ENCODE measurements at regions of chrX and their contacts with region 1.

Region 1: DNA sequence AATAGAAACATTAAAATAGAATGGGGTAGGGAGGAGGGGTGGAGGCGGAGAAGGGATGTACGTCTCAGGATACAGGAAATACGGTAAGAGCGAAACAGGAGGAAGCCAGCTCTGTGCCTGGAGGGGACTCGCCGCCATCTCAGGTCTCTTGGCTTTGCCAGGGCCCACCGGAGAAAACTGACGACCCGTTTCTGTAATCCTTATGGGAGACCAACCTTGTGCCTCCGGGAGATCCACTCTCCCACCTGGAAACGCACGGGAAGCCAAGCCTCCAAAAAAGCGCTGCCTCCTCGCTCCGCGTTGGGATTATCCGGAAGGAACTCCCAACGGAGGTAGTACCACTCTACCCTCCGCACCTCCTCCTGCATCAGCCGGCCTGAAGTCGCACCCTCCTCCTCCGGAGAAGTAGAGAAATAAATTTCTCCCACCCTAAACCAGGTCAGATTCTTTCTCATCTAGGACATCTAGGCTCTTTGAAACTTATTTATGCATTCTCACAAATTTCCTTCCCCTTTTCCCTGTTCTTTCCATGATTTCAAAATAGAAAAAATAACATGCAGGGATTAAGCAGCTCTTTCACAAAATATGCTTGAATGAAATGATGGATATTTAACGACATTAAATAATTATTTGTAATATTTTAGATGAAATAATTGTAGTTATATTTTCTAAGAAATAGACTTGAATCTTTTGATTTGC is at the start of gene NBDY:
- DNase-seq: no peak
- ATAC-seq: peak; percentile 86
- H3K4me3 ChIP-seq: peak within 1 kb of the TSS; percentile 84
- H3K27ac ChIP-seq: peak within 1 kb of the TSS; percentile 74
- H3K4me1 ChIP-seq: no peaks in the 10 kb centered on the region
- H3K27me3 ChIP-seq: no peaks in the 10 kb centered on the region
- CTCF ChIP-seq: no peak
- EP300 ChIP-seq: no peak
- POLR2A ChIP-seq: peak; percentile 59
- RAD21 ChIP-seq: no peak
- polyA plus RNA-seq, gene NBDY: 113 to 115 TPM

Region 2: GRCh38 chrX:55717521-55718497 is 1011.5 kb before region 1 on chrX and contains the start of gene RRAGB:
- CTCF ChIA-PET with region 1: interaction called, 6 read pairs
- POLR2A ChIA-PET with region 1: no interaction called
- RAD21 ChIA-PET with region 1: interaction called, 3 read pairs
- SMC1A ChIA-PET with region 1: interaction called, 4 read pairs
- in situ Hi-C with region 1: loop called (anchors 25 kb)
- intact Hi-C with region 1: no loop called
- DNase-seq: peak; percentile 90
- ATAC-seq: peak; percentile 96
- H3K4me3 ChIP-seq: peak within 1 kb of the TSS; percentile 63
- H3K27ac ChIP-seq: peak within 1 kb of the TSS; percentile 84
- H3K4me1 ChIP-seq: no peaks in the 10 kb centered on the region
- H3K27me3 ChIP-seq: no peaks in the 10 kb centered on the region
- CTCF ChIP-seq: peak; percentile 42 to 65 (median 52); a peak in 5 of 6 replicates
- EP300 ChIP-seq: no peak
- POLR2A ChIP-seq: peak; percentile 80
- RAD21 ChIP-seq: peak; percentile 56
- polyA plus RNA-seq, gene RRAGB: 9.2 to 12.4 TPM

Region 3: GRCh38 chrX:56281789-56282188 is 447.5 kb before region 1 on chrX:
- CTCF ChIA-PET with region 1: interaction called, 36 read pairs
- POLR2A ChIA-PET with region 1: no interaction called
- RAD21 ChIA-PET with region 1: interaction called, 10 read pairs
- SMC1A ChIA-PET with region 1: interaction called, 12 read pairs
- in situ Hi-C with region 1: no loop called
- intact Hi-C with region 1: loop called (anchors 2 kb)
- DNase-seq: no peak
- ATAC-seq: no peak
- H3K4me3 ChIP-seq: no peak overlapping the region
- H3K27ac ChIP-seq: no peak overlapping the region
- H3K4me1 ChIP-seq: no peaks in the 10 kb centered on the region
- H3K27me3 ChIP-seq: no peaks in the 10 kb centered on the region
- CTCF ChIP-seq: peak; percentile 15 to 37 (median 19); a peak in 2 of 6 replicates
- EP300 ChIP-seq: no peak
- POLR2A ChIP-seq: no peak
- RAD21 ChIP-seq: peak; percentile 65

Region 4: GRCh38 chrX:56569378-56570057 is 159.8 kb before region 1 on chrX:
- CTCF ChIA-PET with region 1: interaction called, 5 read pairs
- POLR2A ChIA-PET with region 1: no interaction called
- RAD21 ChIA-PET with region 1: interaction called, 3 read pairs
- SMC1A ChIA-PET with region 1: interaction called, 11 read pairs
- in situ Hi-C with region 1: loop called (anchors 25 kb)
- intact Hi-C with region 1: loop called (anchors 5 kb)
- DNase-seq: no peak
- ATAC-seq: peak; percentile 53
- H3K4me3 ChIP-seq: no peak overlapping the region
- H3K27ac ChIP-seq: peak overlapping the region; percentile 24
- H3K4me1 ChIP-seq: no peaks in the 10 kb centered on the region
- H3K27me3 ChIP-seq: no peaks in the 10 kb centered on the region
- CTCF ChIP-seq: no peak
- EP300 ChIP-seq: no peak
- POLR2A ChIP-seq: no peak
- RAD21 ChIP-seq: no peak

Region 5: GRCh38 chrX:56618323-56618722 is 111.0 kb before region 1 on chrX:
- CTCF ChIA-PET with region 1: no interaction called
- POLR2A ChIA-PET with region 1: no interaction called
- RAD21 ChIA-PET with region 1: no interaction called
- SMC1A ChIA-PET with region 1: no interaction called
- in situ Hi-C with region 1: no loop called
- intact Hi-C with region 1: no loop called
- DNase-seq: no peak
- ATAC-seq: no peak
- H3K4me3 ChIP-seq: no peak overlapping the region
- H3K27ac ChIP-seq: no peak overlapping the region
- H3K4me1 ChIP-seq: no peaks in the 10 kb centered on the region
- H3K27me3 ChIP-seq: no peaks in the 10 kb centered on the region
- CTCF ChIP-seq: no peak
- EP300 ChIP-seq: no peak
- POLR2A ChIP-seq: no peak
- RAD21 ChIP-seq: no peak

Region 6: GRCh38 chrX:57595381-57595811 is 866.1 kb after region 1 on chrX:
- CTCF ChIA-PET with region 1: no interaction called
- POLR2A ChIA-PET with region 1: no interaction called
- RAD21 ChIA-PET with region 1: no interaction called
- SMC1A ChIA-PET with region 1: no interaction called
- in situ Hi-C with region 1: no loop called
- intact Hi-C with region 1: loop called (anchors 10 kb)
- DNase-seq: no peak
- ATAC-seq: peak; percentile 4; the same call in 1 of the 3 replicates
- H3K4me3 ChIP-seq: peak overlapping the region; percentile 18; the same call in 1 of the 2 replicates
- H3K27ac ChIP-seq: no peak overlapping the region
- H3K4me1 ChIP-seq: no peaks in the 10 kb centered on the region
- H3K27me3 ChIP-seq: no peaks in the 10 kb centered on the region
- CTCF ChIP-seq: no peak
- EP300 ChIP-seq: no peak
- POLR2A ChIP-seq: no peak
- RAD21 ChIP-seq: no peak

Measured in GM12878 (cell line).